H1 (cell line): ENCODE measurements at regions of chr11 and their contacts with region 1.

Region 1: GRCh38 chr11:19698493-19699292 is 13.9 kb upstream of the NAV2 start:
- DNase-seq: no peak
- H3K4me3 ChIP-seq: no peak overlapping the region
- H3K27ac ChIP-seq: no peak overlapping the region
- H3K4me1 ChIP-seq: peaks cover 0 to 12% (median 7%) of the 10 kb centered on the region in 4 experiments; a peak in 5 of 7 replicates
- H3K27me3 ChIP-seq: no peaks in the 10 kb centered on the region; a peak in 1 of 7 replicates
- CTCF ChIP-seq: no peak
- EP300 ChIP-seq: no peak
- POLR2A ChIP-seq: no peak
- RAD21 ChIP-seq: no peak

Region 2: GRCh38 chr11:19614370-19614940 is 84.2 kb before region 1 on chr11:
- CTCF ChIA-PET with region 1: no interaction called
- POLR2A ChIA-PET with region 1: no interaction called
- DNase-seq: no peak
- H3K4me3 ChIP-seq: no peak overlapping the region
- H3K27ac ChIP-seq: no peak overlapping the region
- H3K4me1 ChIP-seq: no peaks in the 10 kb centered on the region
- H3K27me3 ChIP-seq: no peaks in the 10 kb centered on the region
- CTCF ChIP-seq: no peak
- EP300 ChIP-seq: no peak
- POLR2A ChIP-seq: no peak
- RAD21 ChIP-seq: no peak

Region 3: DNA sequence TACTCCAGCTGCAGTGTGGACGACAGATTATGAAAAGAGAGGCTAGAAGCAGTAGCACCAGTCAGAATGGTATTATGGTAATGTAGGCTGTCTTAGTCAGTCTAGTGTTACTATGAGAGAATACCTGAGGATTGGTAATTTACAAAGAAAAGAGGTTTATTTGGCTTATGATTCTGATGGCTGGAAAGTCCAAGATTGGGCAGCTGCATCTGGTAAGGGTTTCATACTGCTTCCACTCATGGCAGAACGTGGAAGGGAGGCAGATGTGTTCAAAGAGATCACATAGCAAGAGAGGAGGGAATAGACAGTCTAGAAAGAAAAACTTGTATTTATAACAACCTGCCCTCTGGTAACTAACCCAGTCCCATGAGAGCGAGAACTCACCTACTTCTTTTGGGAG is 63.4 kb before region 1 on chr11:
- CTCF ChIA-PET with region 1: no interaction called
- POLR2A ChIA-PET with region 1: no interaction called
- DNase-seq: no peak
- H3K4me3 ChIP-seq: no peak overlapping the region
- H3K27ac ChIP-seq: no peak overlapping the region
- H3K4me1 ChIP-seq: no peaks in the 10 kb centered on the region
- H3K27me3 ChIP-seq: no peaks in the 10 kb centered on the region
- CTCF ChIP-seq: no peak
- EP300 ChIP-seq: no peak
- POLR2A ChIP-seq: no peak
- RAD21 ChIP-seq: no peak

Region 4: GRCh38 chr11:19712281-19713220 is 13.9 kb after region 1 on chr11 and contains the start of gene NAV2:
- CTCF ChIA-PET with region 1: interaction called, 6 read pairs
- POLR2A ChIA-PET with region 1: interaction called, 22 read pairs
- DNase-seq: peak; percentile 80 to 92
- H3K4me3 ChIP-seq: peak within 1 kb of the TSS; percentile 48 to 65 (median 54)
- H3K27ac ChIP-seq: peak within 1 kb of the TSS; percentile 69; the same call in 1 of the 2 replicates
- H3K4me1 ChIP-seq: peaks cover 0 to 13% (median 10%) of the 10 kb centered on the region in 4 experiments; a peak in 6 of 7 replicates
- H3K27me3 ChIP-seq: peaks cover 8 to 33% (median 29%) of the 10 kb centered on the region in 4 experiments
- CTCF ChIP-seq: no peak
- EP300 ChIP-seq: no peak; a peak in 1 of 3 replicates
- POLR2A ChIP-seq: peak; percentile 46 to 88
- RAD21 ChIP-seq: no peak
- total RNA-seq, gene NAV2: 66.9 and 73.6 TPM in 2 replicates

Region 5: DNA sequence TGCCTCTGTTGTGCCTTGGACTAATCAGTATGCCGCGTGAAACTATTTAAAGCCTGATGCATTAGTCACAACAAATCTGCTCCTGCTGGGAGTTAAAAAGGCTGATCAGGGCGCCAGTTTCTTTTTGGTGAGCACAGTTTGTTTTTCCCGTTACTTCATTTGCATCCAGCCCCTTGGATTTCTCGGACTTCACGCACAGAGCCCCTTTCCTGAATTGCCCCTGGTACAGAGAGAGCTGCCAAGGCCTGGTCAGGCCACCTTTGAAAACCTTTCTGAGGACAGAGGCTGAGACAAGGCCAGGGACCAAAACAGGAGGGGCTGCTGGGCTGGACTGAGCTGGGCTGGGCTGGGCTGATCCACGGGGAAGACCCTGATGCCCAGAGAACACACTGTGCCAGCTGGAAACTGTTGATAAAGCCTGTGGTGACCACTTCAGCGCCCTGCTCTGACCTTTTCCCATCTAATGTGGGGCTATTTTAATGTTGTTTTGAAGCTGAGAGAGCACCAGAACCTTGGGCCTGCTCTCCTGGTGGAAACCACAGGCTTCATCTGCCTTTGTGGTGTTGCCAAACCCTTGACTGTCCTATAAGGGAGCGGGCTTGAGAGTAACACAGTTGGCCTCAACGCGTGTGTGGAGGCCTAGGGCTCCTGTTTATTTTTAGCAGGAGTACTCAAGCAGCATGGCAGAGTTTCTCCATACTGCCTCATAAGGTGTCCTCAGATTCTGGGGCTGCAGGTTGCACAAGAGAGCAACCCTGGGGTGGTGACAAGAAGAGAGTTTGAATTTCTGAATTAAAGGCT is 58.2 kb after region 1 on chr11:
- CTCF ChIA-PET with region 1: no interaction called
- POLR2A ChIA-PET with region 1: no interaction called
- DNase-seq: no peak
- H3K4me3 ChIP-seq: no peak overlapping the region
- H3K27ac ChIP-seq: no peak overlapping the region
- H3K4me1 ChIP-seq: peaks cover 0 to 18% (median 11%) of the 10 kb centered on the region in 4 experiments; a peak in 6 of 7 replicates
- H3K27me3 ChIP-seq: no peaks in the 10 kb centered on the region
- CTCF ChIP-seq: no peak
- EP300 ChIP-seq: no peak
- POLR2A ChIP-seq: no peak
- RAD21 ChIP-seq: no peak